A673 (cell line): ENCODE measurements at regions of chrX and their contacts with region 1.

Region 1: GRCh38 chrX:65985922-65986588 is 53.8 kb downstream of the VSIG4 start:
- DNase-seq: peak; percentile 85
- H3K4me3 ChIP-seq: no peak overlapping the region
- H3K27ac ChIP-seq: peak overlapping the region; percentile 49
- H3K4me1 ChIP-seq: peaks cover 4% of the 10 kb centered on the region
- H3K27me3 ChIP-seq: no peaks in the 10 kb centered on the region
- CTCF ChIP-seq: peak; percentile 62

Region 2: DNA sequence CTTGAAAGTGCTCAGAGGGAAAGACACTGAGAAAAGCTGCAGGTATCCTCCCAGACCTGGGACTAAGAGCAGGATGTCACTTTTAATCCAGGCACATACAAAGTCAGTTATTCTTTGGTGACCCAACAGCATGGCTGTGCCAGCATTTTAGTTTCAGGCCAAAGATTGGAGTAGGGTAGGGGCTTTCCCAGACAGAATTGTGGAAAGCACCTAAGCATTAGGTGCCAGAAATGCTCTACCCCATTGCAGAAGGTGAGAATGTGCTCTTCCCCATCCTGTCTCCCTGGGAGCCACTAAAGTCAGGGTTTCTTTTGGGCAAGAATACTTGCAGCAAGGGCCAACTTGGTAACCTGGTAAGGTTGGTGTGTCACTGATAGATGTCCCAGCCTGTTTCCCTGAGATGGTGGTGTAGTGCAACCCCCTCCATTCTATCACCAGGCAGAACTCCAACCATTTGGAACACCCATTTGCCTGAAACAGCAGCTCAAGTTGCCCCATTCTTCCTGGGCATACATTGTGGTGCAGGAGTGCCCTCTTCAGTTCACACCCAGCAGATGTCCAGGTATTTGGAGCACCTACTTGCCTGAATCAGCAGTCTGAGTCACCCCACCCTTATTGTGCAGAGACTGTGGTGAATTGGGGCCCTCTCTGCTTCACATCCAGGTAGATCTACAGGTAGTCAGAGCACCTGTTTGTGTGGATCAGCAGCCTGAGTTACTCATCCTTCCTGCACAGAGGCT is 1193.3 kb before region 1 on chrX:
- CTCF ChIA-PET with region 1: no interaction called
- POLR2A ChIA-PET with region 1: no interaction called
- intact Hi-C with region 1: no loop called
- DNase-seq: no peak
- H3K4me3 ChIP-seq: no peak overlapping the region
- H3K27ac ChIP-seq: no peak overlapping the region
- H3K4me1 ChIP-seq: no peaks in the 10 kb centered on the region
- H3K27me3 ChIP-seq: no peaks in the 10 kb centered on the region
- CTCF ChIP-seq: no peak

Region 3: GRCh38 chrX:65745992-65746391 is 240.1 kb before region 1 on chrX:
- CTCF ChIA-PET with region 1: interaction called, 6 read pairs
- POLR2A ChIA-PET with region 1: no interaction called
- intact Hi-C with region 1: loop called (anchors 5 kb)
- DNase-seq: no peak
- H3K4me3 ChIP-seq: no peak overlapping the region
- H3K27ac ChIP-seq: no peak overlapping the region
- H3K4me1 ChIP-seq: no peaks in the 10 kb centered on the region
- H3K27me3 ChIP-seq: no peaks in the 10 kb centered on the region
- CTCF ChIP-seq: peak; percentile 38; the same call in 1 of the 2 replicates

Region 4: GRCh38 chrX:66163849-66164411 is 177.9 kb after region 1 on chrX and contains the start of gene HEPH:
- CTCF ChIA-PET with region 1: no interaction called
- POLR2A ChIA-PET with region 1: no interaction called
- intact Hi-C with region 1: no loop called
- DNase-seq: no peak
- H3K4me3 ChIP-seq: no peak within 1 kb of the TSS
- H3K27ac ChIP-seq: no peak within 1 kb of the TSS
- H3K4me1 ChIP-seq: no peaks in the 10 kb centered on the region
- H3K27me3 ChIP-seq: no peaks in the 10 kb centered on the region
- CTCF ChIP-seq: no peak
- total RNA-seq, gene HEPH: not detected in 2 replicates